Astrocyte of the cerebellum (primary cell): ENCODE measurements at regions of chr1 and their contacts with region 1.

Region 1: GRCh38 chr1:115123116-115123515 is 33.8 kb upstream of the TSPAN2 start:
- DNase-seq: no peak
- H3K4me3 ChIP-seq: no peak overlapping the region
- CTCF ChIP-seq: no peak

Region 2: GRCh38 chr1:114861384-114861783 is 261.7 kb before region 1 on chr1:
- in situ Hi-C with region 1: no loop called
- DNase-seq: no peak
- H3K4me3 ChIP-seq: no peak overlapping the region
- CTCF ChIP-seq: no peak

Region 3: GRCh38 chr1:115056395-115056798 is 66.7 kb before region 1 on chr1:
- in situ Hi-C with region 1: loop called (anchors 5 kb)
- DNase-seq: peak; percentile 72
- H3K4me3 ChIP-seq: peak overlapping the region; percentile 9
- CTCF ChIP-seq: no peak